ENCODE measurements at regions of chr4 and their contacts with region 1.

Region 1: DNA sequence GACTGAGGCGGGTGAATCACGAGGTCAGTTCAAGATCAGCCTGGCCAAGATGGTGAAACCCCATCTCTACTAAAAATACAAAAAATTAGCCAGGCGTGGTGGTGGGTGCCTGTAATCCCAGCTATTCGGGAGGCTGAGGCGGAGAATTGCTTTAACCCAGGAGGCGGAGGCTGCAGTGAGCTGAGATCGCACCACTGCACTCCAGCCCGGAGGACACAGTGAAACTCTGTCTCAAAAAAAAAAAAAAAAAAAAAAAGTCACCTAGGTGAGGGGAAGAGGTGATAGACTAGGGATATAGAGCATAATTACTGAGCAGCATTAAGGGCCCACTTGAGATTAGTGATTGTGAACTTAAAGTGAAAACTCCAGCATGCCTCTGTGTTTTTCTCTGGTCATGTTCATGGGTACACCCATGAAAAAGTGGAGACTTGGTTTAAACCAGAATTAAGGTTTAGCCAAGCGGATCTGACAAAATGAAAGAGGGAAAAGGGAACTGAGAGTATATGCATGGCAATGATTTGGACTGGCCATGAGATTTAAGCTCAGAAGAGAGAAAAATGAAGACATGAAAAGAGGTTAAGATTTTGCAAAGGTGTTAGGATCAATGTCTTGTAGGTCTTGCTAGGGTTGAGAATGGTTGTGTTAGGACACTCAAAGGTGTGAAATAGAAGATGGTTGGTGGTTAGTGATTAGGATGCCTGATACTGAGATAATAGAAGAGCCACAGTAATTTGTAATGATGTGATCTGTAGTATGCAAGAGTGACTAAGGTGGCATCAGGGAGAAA is 105.0 kb downstream of the RAB28 start:
- DNase-seq: no peak
- ATAC-seq: no peak
- H3K4me3 ChIP-seq: no peak overlapping the region
- H3K27ac ChIP-seq: no peak overlapping the region
- H3K4me1 ChIP-seq: no peaks in the 10 kb centered on the region
- H3K27me3 ChIP-seq: no peaks in the 10 kb centered on the region
- CTCF ChIP-seq: no peak

Region 2: DNA sequence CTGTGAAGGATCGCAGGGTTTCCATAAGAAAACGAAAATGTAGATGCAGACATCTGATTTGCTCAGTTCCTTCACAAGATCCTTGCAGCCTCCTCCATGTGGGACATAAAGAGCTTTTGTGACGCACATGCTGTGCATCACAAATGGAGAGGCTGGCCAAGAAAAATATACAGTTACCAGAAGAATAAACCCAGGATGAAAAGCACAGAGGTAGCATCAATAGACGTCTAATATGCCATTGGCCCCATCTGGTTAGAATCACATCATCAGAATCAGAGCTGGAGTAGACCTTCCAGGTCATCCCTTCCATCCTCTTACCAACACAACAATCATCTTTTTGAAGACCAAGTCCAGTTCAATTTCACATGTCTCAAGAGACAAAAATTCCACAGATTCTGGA is 412.4 kb before region 1 on chr4:
- CTCF ChIA-PET with region 1: no interaction called
- POLR2A ChIA-PET with region 1: interaction called, 13 read pairs
- in situ Hi-C with region 1: no loop called
- intact Hi-C with region 1: no loop called
- DNase-seq: no peak
- ATAC-seq: no peak
- H3K4me3 ChIP-seq: no peak overlapping the region
- H3K27ac ChIP-seq: no peak overlapping the region
- H3K4me1 ChIP-seq: no peaks in the 10 kb centered on the region
- H3K27me3 ChIP-seq: no peaks in the 10 kb centered on the region
- CTCF ChIP-seq: no peak

Measured in Panc1 (cell line).